Transverse colon (tissue), 4 donors: ENCODE measurements at regions of chr14 and their contacts with region 1.

Region 1: GRCh38 chr14:65993103-65993502 is 493.1 kb upstream of the CCDC196 start:
- DNase-seq: no peak
- H3K4me3 ChIP-seq: no peak overlapping the region
- H3K27ac ChIP-seq: no peak overlapping the region
- H3K4me1 ChIP-seq: no peaks in the 10 kb centered on the region
- H3K27me3 ChIP-seq: no peaks in the 10 kb centered on the region
- CTCF ChIP-seq: no peak
- EP300 ChIP-seq: no peak
- POLR2A ChIP-seq: no peak

Region 2: DNA sequence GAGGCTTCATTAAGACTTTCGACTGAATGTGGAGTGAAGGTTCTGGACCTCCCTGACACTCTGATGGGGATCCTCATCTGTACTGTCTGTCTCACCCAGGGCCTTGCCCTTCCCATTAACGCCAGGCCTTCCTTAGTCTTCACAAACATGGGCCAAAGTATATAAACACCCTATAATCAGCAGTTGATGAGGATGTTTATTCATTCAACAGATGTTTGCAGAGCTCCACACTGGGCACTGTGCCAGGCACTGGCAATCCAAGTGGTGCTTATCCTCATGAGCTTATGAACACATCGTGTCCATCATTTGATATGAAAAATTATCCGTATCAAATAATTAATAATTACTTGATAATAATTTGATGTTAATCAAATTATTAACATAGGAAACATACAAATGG is 126.2 kb before region 1 on chr14:
- in situ Hi-C with region 1: no loop called
- intact Hi-C with region 1: no loop called
- DNase-seq: peak; percentile 12
- H3K4me3 ChIP-seq: no peak overlapping the region
- H3K27ac ChIP-seq: no peak overlapping the region
- H3K4me1 ChIP-seq: no peaks in the 10 kb centered on the region
- H3K27me3 ChIP-seq: no peaks in the 10 kb centered on the region
- CTCF ChIP-seq: no peak
- EP300 ChIP-seq: no peak
- POLR2A ChIP-seq: no peak

Region 3: GRCh38 chr14:66045572-66046021 is 52.5 kb after region 1 on chr14:
- in situ Hi-C with region 1: no loop called
- intact Hi-C with region 1: loop called (anchors 2 kb)
- DNase-seq: no peak
- H3K4me3 ChIP-seq: no peak overlapping the region
- H3K27ac ChIP-seq: no peak overlapping the region
- H3K4me1 ChIP-seq: no peaks in the 10 kb centered on the region
- H3K27me3 ChIP-seq: no peaks in the 10 kb centered on the region
- CTCF ChIP-seq: no peak
- EP300 ChIP-seq: no peak
- POLR2A ChIP-seq: no peak